Activated CD4-positive, alpha-beta memory T cell treated with anti-CD3 and anti-CD28 coated beads, Interleukin-2, amount 10 ng/mL, durations not matched to agents 7 days and 5 days (primary cell): ENCODE measurements at regions of chr2 and their contacts with region 1.

Region 1: GRCh38 chr2:233142355-233142897 is 82.3 kb downstream of the INPP5D start:
- DNase-seq: peak; percentile 73
- H3K4me3 Mint-ChIP-seq: peak overlapping the region; percentile 46
- H3K27ac Mint-ChIP-seq: peak overlapping the region; percentile 92
- H3K4me1 Mint-ChIP-seq: peaks cover 53% of the 10 kb centered on the region
- H3K27me3 Mint-ChIP-seq: no peaks in the 10 kb centered on the region

Region 2: GRCh38 chr2:233165895-233166661 is 23.7 kb after region 1 on chr2:
- CTCF ChIA-PET with region 1: no interaction called
- POLR2A ChIA-PET with region 1: interaction called, 13 read pairs
- DNase-seq: peak; percentile 85
- H3K4me3 Mint-ChIP-seq: no peak overlapping the region
- H3K27ac Mint-ChIP-seq: no peak overlapping the region
- H3K4me1 Mint-ChIP-seq: peaks cover 10% of the 10 kb centered on the region
- H3K27me3 Mint-ChIP-seq: no peaks in the 10 kb centered on the region

Region 3: GRCh38 chr2:233202531-233202944 is 60.1 kb after region 1 on chr2:
- CTCF ChIA-PET with region 1: no interaction called
- POLR2A ChIA-PET with region 1: no interaction called
- DNase-seq: no peak
- H3K4me3 Mint-ChIP-seq: no peak overlapping the region
- H3K27ac Mint-ChIP-seq: peak overlapping the region; percentile 61
- H3K4me1 Mint-ChIP-seq: peaks cover 2% of the 10 kb centered on the region
- H3K27me3 Mint-ChIP-seq: no peaks in the 10 kb centered on the region

Region 4: GRCh38 chr2:233418761-233419625 is 276.6 kb after region 1 on chr2:
- CTCF ChIA-PET with region 1: no interaction called
- POLR2A ChIA-PET with region 1: no interaction called
- DNase-seq: peak; percentile 65
- H3K4me3 Mint-ChIP-seq: peak overlapping the region; percentile 76
- H3K27ac Mint-ChIP-seq: peak overlapping the region; percentile 99
- H3K4me1 Mint-ChIP-seq: peaks cover 97% of the 10 kb centered on the region
- H3K27me3 Mint-ChIP-seq: no peaks in the 10 kb centered on the region

Region 5: GRCh38 chr2:233756429-233757081 is 614.1 kb after region 1 on chr2:
- CTCF ChIA-PET with region 1: no interaction called
- POLR2A ChIA-PET with region 1: no interaction called
- DNase-seq: no peak
- H3K4me3 Mint-ChIP-seq: no peak overlapping the region
- H3K27ac Mint-ChIP-seq: no peak overlapping the region
- H3K4me1 Mint-ChIP-seq: no peaks in the 10 kb centered on the region
- H3K27me3 Mint-ChIP-seq: peaks cover 5% of the 10 kb centered on the region